Caco-2 (cell line): ENCODE measurements at regions of chr10 and their contacts with region 1.

Region 1: GRCh38 chr10:47361293-47361692 is 13.1 kb downstream of the RBP3 start:
- DNase-seq: peak; percentile 72 to 77
- H3K4me3 ChIP-seq: no peak overlapping the region
- H3K4me3 Mint-ChIP-seq: no peak overlapping the region
- H3K27ac Mint-ChIP-seq: no peak overlapping the region
- H3K4me1 ChIP-seq: peaks cover 13% of the 10 kb centered on the region
- H3K4me1 Mint-ChIP-seq: no peaks in the 10 kb centered on the region
- H3K27me3 ChIP-seq: no peaks in the 10 kb centered on the region
- H3K27me3 Mint-ChIP-seq: no peaks in the 10 kb centered on the region
- CTCF ChIP-seq: peak; percentile 91 to 93

Region 2: GRCh38 chr10:47340608-47341170 is 20.6 kb before region 1 on chr10:
- CTCF ChIA-PET with region 1: interaction called, 10 read pairs
- POLR2A ChIA-PET with region 1: no interaction called
- intact Hi-C with region 1: no loop called
- DNase-seq: peak; percentile 68 to 85
- H3K4me3 ChIP-seq: no peak overlapping the region
- H3K4me3 Mint-ChIP-seq: no peak overlapping the region
- H3K27ac Mint-ChIP-seq: no peak overlapping the region
- H3K4me1 ChIP-seq: no peaks in the 10 kb centered on the region
- H3K4me1 Mint-ChIP-seq: no peaks in the 10 kb centered on the region
- H3K27me3 ChIP-seq: no peaks in the 10 kb centered on the region
- H3K27me3 Mint-ChIP-seq: peaks cover 16% of the 10 kb centered on the region
- CTCF ChIP-seq: peak; percentile 97 to 98